ENCODE measurements at regions of chr5 and their contacts with region 1.

Region 1: DNA sequence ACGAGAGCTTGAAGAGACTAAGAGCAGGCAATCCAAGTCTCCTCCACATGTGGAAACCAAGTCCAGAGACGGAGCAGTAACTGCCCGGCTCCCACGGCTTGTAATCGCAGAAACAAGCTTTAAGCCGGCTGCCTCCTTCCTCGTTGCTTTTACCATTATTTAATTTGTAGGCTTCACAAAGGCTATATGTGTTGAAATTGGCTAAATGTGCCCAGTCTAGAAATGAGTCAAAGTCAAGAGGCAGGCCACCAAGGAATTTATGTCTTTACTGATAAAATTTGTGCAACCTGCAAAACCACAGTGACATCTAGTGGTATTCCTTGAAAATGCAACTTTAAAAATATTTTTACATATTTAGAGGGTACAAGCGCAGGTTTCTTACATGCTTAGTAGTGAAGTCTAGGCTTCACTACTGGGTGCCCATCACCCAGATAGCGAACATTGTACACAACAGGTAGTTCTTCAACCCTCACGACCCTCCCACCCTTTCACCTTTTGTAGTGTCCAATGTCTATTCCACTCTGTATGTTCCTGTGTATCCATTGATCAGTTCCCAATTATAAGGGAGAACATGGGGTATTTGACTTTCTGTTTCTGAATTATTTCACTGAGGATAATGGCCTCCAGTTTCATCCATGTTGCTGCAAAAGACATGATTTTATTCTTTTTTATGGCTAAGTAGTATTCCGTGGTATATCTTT is 33.5 kb upstream of the EBF1 start:
- DNase-seq: peak; percentile 5 to 21 (median 16)
- H3K4me3 ChIP-seq: no peak overlapping the region
- H3K4me3 Mint-ChIP-seq: no peak overlapping the region
- H3K27ac ChIP-seq: no peak overlapping the region
- H3K27ac Mint-ChIP-seq: no peak overlapping the region
- H3K4me1 ChIP-seq: no peaks in the 10 kb centered on the region
- H3K4me1 Mint-ChIP-seq: no peaks in the 10 kb centered on the region
- H3K27me3 ChIP-seq: no peaks in the 10 kb centered on the region
- H3K27me3 Mint-ChIP-seq: peaks cover under 1 to 6% (median 3%) of the 10 kb centered on the region in 3 donors
- CTCF ChIP-seq: peak; percentile 89

Region 2: GRCh38 chr5:157761690-157762621 is 1371.2 kb before region 1 on chr5:
- intact Hi-C with region 1: loop called in 1 of 2 experiments (anchors 10 kb)
- DNase-seq: peak; percentile 23 to 55 (median 37)
- H3K4me3 ChIP-seq: no peak overlapping the region
- H3K4me3 Mint-ChIP-seq: no peak overlapping the region
- H3K27ac ChIP-seq: no peak overlapping the region
- H3K27ac Mint-ChIP-seq: no peak overlapping the region
- H3K4me1 ChIP-seq: no peaks in the 10 kb centered on the region
- H3K4me1 Mint-ChIP-seq: no peaks in the 10 kb centered on the region
- H3K27me3 ChIP-seq: no peaks in the 10 kb centered on the region
- H3K27me3 Mint-ChIP-seq: no peaks in the 10 kb centered on the region
- CTCF ChIP-seq: peak; percentile 92

Region 3: DNA sequence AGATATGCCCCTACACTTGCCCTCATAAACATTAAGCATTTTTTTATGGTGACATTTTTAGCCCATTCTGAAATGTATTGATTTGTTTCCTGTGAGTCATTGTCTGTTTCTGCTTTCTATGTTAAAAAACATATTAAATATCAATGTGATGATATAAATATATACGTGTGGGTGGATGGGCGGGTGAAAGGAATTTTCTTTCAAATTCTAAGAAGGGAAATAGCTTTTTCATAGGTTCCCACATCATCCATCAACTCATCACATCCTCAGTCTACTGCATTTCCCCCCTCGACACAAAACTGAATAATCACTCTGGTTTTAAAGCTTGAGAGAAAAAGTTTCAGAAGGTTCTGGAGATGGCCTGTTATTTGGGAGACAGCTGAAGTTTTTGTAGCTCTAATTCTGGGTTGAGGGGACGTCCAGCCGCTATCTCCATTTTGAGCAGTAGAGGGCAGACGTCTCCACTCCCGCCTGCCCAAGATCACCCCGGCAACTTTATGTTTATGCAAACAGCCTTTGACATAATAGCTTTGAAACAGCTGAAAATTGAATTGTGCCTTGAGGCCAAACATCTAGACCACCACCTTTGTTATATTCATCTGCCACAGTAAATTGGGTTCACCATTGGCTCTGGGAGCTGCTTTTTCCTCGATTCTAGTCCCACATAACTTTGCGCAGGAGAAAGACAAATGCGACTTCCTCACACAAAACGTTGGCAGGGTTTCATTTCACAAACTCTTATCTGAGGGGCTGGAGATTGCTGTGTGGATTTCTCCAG is 1058.0 kb before region 1 on chr5:
- intact Hi-C with region 1: loop called in 1 of 2 experiments (anchors 5 kb)
- DNase-seq: peak; percentile 9 to 26 (median 17)
- H3K4me3 ChIP-seq: no peak overlapping the region
- H3K4me3 Mint-ChIP-seq: peak overlapping the region; percentile 51 to 81
- H3K27ac ChIP-seq: no peak overlapping the region
- H3K27ac Mint-ChIP-seq: no peak overlapping the region
- H3K4me1 ChIP-seq: no peaks in the 10 kb centered on the region
- H3K4me1 Mint-ChIP-seq: peaks cover 5% of the 10 kb centered on the region
- H3K27me3 ChIP-seq: peaks cover 0 to 2% of the 10 kb centered on the region in 2 donors
- H3K27me3 Mint-ChIP-seq: peaks cover 0 to 7% (median 7%) of the 10 kb centered on the region in 3 donors
- CTCF ChIP-seq: peak; percentile 81

Region 4: DNA sequence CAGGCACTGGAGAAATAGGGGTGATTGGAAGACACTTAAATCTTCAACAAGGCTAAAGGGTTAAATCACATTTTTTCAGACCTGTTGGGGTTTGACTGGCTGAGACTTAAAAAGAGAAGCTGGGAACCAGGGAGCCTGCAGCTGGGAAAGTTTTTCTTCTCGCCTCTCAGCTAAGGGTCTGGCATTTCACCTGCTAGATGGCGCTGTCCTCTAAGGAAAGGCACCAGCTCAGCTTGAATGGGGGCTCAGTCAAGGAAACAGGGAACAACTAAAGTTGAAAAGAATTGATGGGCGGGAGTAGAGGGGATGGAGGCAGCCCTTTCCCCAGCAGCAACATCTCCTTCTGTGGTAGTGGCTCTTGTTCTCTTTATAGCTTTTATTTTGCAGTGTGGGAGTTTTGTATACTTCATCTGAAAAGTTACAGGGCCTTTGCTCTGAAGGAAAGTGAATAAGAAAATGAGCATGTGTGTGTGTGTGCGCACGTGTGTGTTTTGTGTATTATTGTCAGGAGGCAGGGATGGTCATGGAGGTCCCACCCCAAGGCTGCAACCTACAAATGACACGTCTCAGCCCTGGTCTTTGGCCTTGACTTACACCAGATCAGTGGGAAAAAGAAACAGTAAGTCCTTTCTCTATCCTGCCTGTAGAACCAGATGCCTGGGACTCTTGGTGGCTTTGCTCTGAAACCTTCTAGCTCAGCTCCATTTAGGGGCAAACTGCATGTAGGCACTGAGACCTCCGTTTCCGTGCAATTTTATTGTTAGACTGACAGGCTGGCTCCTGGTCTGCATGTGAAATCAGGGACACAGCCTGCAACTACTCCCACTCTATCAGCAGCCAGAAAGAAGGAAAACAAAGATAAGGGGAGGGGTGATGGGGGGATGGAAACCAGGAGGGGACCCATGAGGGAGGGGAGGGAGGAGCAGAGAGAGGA is 958.0 kb before region 1 on chr5:
- intact Hi-C with region 1: loop called in 1 of 2 experiments (anchors 10 kb)
- DNase-seq: peak; percentile 33 to 62 (median 59)
- H3K4me3 ChIP-seq: no peak overlapping the region
- H3K4me3 Mint-ChIP-seq: no peak overlapping the region
- H3K27ac ChIP-seq: no peak overlapping the region
- H3K27ac Mint-ChIP-seq: no peak overlapping the region
- H3K4me1 ChIP-seq: no peaks in the 10 kb centered on the region
- H3K4me1 Mint-ChIP-seq: peaks cover 13% of the 10 kb centered on the region
- H3K27me3 ChIP-seq: no peaks in the 10 kb centered on the region
- H3K27me3 Mint-ChIP-seq: peaks cover 2 to 9% (median 4%) of the 10 kb centered on the region in 3 donors
- CTCF ChIP-seq: peak; percentile 81

Region 5: DNA sequence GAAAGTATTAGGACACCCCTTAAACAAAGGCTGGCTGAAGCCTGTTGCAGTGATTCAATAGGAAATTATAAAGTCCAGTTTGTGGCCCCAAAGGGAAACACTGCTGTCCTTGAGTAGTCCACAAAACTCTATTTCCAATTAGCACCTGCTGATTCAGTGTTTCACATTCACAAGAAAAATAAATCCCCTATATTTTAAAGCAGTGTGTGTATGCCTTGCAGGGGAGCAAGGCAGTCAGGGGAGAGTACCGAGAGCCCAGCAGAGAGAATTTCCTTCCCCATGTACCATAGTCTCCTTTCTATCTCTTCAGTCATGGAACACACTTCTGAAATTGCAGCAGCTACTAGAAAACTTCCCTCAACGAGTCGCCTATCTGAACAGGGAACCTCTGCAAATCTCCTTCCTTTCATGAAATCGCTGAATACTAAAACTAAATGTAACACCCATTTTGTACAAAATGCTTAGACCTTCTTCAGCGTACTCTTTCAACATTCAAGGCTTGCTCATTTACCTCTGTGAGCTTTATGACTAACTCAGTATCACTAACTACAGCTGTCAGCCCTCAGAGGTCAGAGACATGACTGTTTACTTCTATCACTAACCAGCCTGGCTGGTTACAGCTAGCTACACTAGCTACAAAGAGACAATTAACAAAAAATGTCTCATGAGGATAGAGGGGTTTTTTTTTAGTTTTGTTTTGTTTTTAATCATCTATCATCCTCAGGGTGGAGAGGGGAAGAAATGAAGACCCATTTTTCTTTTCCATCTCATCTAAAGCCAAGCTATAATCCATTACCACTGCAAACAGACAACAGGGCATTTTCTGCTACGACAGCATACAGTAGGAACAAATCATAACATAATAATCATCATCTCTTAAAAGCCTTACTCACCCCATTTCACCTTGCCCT is 222.2 kb before region 1 on chr5:
- intact Hi-C with region 1: no loop called
- DNase-seq: no peak
- H3K4me3 ChIP-seq: no peak overlapping the region
- H3K4me3 Mint-ChIP-seq: no peak overlapping the region
- H3K27ac ChIP-seq: no peak overlapping the region
- H3K27ac Mint-ChIP-seq: no peak overlapping the region
- H3K4me1 ChIP-seq: no peaks in the 10 kb centered on the region
- H3K4me1 Mint-ChIP-seq: no peaks in the 10 kb centered on the region
- H3K27me3 ChIP-seq: no peaks in the 10 kb centered on the region
- H3K27me3 Mint-ChIP-seq: peaks cover 7 to 12% (median 8%) of the 10 kb centered on the region in 3 donors
- CTCF ChIP-seq: no peak